ENCODE measurements at regions of chr13 and their contacts with region 1.

Region 1: DNA sequence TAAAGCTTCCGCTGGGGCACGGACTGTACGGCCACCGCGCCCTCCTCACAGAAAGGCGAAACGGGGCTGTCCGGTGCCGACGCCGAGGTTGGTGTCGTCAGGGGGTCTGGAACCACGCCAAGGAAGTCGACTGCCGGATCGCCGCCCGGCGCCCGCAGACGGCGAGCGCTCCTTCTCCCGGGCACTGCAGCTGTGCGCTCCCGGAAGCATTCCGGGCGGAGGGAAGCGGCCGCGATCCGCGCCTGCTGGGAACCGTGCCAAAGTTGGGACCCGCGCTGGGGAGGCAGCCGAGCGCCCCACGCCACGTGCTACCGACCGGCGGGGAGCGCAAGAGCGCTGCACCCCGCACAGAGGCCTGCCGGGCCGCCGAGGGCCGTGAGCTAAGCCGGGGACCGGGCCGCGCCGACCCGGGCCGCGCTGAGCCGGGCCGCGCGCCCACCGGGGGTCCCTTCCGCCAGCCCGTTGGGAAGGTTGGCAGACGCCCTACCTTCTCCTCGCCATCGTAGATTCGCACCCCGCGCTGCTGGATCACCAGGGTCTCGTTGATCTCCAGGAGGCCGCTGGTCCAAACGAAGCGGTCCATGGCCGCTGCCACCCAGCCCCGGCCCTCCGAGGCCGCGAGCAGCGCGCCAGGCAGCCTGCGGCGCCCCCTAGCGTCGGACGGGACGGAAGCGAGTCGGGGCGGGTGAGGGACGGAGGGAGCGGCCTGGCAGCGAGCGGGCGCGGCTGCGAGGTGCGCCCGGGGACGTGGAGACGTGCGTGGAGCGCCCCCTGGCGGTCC is at the start of gene VPS36:
- DNase-seq: peak; percentile 88 to 99 (median 94)

Region 2: GRCh38 chr13:52011632-52012511 is 438.3 kb before region 1 on chr13 and contains the start of gene ALG11:
- intact Hi-C with region 1: loop called (anchors 5 kb)
- DNase-seq: peak; percentile 98 to 100 (median 99)

Region 3: DNA sequence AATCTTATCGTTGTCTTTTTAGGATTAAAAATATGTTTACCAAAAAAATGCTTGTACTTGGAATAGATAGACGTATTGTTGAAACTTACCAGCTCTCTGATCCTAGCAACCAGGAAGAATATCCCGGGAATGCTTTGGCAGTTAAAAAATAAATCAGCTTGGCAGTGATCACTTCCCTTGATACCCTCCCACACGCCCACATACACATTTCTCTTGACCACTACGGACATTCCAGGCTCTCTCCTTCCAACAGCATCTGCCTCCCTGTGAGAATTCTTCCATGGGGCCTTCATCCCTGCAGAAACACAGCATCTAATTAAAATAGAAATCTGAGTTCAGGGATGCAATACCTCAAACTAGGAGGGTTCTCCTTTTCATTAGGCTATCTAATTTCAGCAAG is 102.1 kb before region 1 on chr13:
- intact Hi-C with region 1: loop called (anchors 1 kb)
- DNase-seq: no peak

Region 4: GRCh38 chr13:52383366-52383765 is 66.8 kb before region 1 on chr13:
- intact Hi-C with region 1: no loop called
- DNase-seq: no peak

Region 5: DNA sequence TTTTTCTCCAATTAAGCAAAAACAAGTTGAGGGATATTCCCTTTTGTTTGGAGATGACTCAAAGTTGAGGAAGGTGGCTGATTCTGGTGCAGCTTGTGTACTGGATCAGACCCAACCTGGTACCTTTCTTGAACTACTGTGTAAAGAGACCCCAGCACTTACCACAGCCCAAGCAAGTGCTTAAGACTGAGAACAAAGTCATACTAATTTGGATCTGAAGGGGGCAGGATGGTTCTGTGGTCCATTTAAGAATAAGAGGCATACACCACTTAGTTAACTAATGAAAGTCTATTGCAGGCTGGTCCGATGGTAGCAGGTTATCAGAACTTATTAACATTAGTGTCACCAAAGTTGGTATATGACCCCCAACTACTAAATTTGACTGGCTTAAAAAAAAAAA is 50.5 kb before region 1 on chr13:
- intact Hi-C with region 1: loop called (anchors 5 kb)
- DNase-seq: no peak

Region 6: DNA sequence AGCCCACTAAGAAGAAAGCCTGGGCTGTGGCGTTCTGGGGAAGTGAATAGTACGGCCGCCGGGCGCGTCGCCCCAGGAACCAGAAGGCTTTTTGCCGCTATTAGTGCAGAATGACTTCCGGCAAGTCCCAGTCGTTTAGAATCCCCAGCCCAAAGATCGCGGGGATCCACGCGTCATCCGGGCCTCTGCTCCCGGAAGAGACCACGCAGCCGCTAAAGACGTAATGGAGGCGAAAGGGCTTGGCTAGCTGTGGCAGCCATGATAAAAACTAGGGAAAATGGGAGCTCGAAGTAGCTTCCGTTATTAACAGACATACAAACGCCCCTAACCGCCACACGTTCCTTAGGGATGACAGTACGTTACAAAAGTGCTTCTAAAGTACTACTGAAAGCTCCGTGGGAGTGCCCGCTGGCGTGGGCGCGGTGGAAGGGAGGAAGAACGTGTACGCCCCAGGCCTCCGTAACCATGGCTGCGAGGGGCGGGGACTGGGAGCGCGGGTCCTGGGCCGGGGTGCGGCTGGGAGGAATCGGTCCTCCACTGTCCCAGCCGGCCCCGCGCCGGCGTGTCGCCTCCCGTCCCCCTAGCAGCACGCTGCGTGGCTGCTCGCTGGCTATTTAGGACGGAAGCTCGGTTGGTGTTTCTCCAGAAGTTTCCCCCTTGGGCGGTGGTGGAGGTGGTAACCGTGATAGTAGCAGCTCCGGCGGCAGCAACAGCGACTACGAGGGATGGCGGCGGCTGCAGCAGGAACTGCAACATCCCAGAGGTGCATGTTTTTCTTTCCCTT is 202.2 kb after region 1 on chr13 and contains the start of gene SUGT1:
- intact Hi-C with region 1: loop called (anchors 5 kb)
- DNase-seq: peak; percentile 94 to 99 (median 96)